CD8-positive, alpha-beta T cell (primary cell): ENCODE measurements at regions of chr15 and their contacts with region 1.

Region 1: GRCh38 chr15:89740137-89740536 is 10.9 kb downstream of the MESP1 start:
- DNase-seq: peak in 8 of 9 experiments; percentile 27 to 80 (median 58)
- ATAC-seq: peak; percentile 91
- H3K4me3 ChIP-seq: no peak overlapping the region
- H3K4me3 Mint-ChIP-seq: no peak overlapping the region
- H3K27ac ChIP-seq: no peak overlapping the region
- H3K27ac Mint-ChIP-seq: no peak overlapping the region
- H3K4me1 ChIP-seq: no peaks in the 10 kb centered on the region
- H3K4me1 Mint-ChIP-seq: peaks cover 2% of the 10 kb centered on the region
- H3K27me3 ChIP-seq: no peaks in the 10 kb centered on the region
- H3K27me3 Mint-ChIP-seq: peaks cover 6% of the 10 kb centered on the region
- CTCF ChIP-seq: peak; percentile 83

Region 2: DNA sequence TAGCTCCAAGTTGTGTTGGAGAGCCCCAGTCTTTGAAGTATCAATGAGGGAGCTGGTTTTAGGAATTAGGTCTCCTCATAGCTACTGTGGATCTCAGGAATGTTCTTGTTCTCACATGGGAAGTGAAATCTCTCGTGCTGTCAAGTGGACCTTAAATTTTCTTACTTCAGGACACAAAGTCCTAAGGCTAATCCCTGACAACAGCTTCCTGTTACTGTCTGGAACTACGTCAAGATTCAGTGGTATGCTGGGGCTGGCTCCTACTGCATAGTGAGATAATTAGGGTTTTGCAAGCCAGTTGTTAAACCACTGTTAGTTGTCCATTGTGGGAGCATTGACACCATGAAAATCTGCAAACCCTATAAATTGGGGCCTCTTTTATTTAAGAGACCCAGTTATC is 11.9 kb before region 1 on chr15:
- CTCF ChIA-PET with region 1: interaction called, 13 read pairs
- POLR2A ChIA-PET with region 1: no interaction called
- intact Hi-C with region 1: no loop called
- DNase-seq: no peak
- ATAC-seq: no peak
- H3K4me3 ChIP-seq: no peak overlapping the region
- H3K4me3 Mint-ChIP-seq: no peak overlapping the region
- H3K27ac ChIP-seq: no peak overlapping the region
- H3K27ac Mint-ChIP-seq: no peak overlapping the region
- H3K4me1 ChIP-seq: no peaks in the 10 kb centered on the region
- H3K4me1 Mint-ChIP-seq: no peaks in the 10 kb centered on the region
- H3K27me3 ChIP-seq: no peaks in the 10 kb centered on the region
- H3K27me3 Mint-ChIP-seq: peaks cover 12% of the 10 kb centered on the region
- CTCF ChIP-seq: no peak

Region 3: GRCh38 chr15:89874926-89875564 is 134.9 kb after region 1 on chr15:
- CTCF ChIA-PET with region 1: interaction called, 22 read pairs
- POLR2A ChIA-PET with region 1: interaction called, 4 read pairs
- intact Hi-C with region 1: loop called in 1 of 2 experiments (anchors 1 kb)
- DNase-seq: peak; percentile 60 to 88 (median 82)
- ATAC-seq: peak; percentile 100
- H3K4me3 ChIP-seq: no peak overlapping the region
- H3K4me3 Mint-ChIP-seq: no peak overlapping the region
- H3K27ac ChIP-seq: no peak overlapping the region
- H3K27ac Mint-ChIP-seq: no peak overlapping the region
- H3K4me1 ChIP-seq: no peaks in the 10 kb centered on the region
- H3K4me1 Mint-ChIP-seq: peaks cover 8% of the 10 kb centered on the region
- H3K27me3 ChIP-seq: no peaks in the 10 kb centered on the region
- H3K27me3 Mint-ChIP-seq: no peaks in the 10 kb centered on the region
- CTCF ChIP-seq: peak; percentile 98

Region 4: DNA sequence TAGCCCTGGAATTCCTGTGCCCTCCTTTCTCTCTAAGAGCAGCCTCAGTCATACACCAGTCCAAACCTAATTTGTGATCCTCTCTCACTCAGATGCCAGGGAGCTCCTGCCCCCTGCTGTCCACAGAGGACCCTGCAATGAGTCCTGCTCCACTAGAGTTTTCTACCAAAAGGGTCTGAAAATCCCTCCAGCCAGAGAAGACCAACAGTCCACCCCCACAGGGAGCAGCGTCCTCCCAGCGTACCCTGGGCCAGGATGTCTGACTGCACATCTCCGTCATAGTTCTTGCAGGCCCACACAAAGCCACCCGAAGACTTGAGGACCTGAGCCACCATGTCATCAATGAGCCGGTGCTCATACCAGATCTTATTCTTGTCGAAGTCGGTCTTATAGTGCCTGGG is 346.7 kb after region 1 on chr15:
- CTCF ChIA-PET with region 1: interaction called, 3 read pairs
- POLR2A ChIA-PET with region 1: no interaction called
- intact Hi-C with region 1: loop called (anchors 1 to 2 kb)
- DNase-seq: peak in 8 of 9 experiments; percentile 27 to 64 (median 48)
- ATAC-seq: peak; percentile 91
- H3K4me3 ChIP-seq: no peak overlapping the region
- H3K4me3 Mint-ChIP-seq: no peak overlapping the region
- H3K27ac ChIP-seq: no peak overlapping the region
- H3K27ac Mint-ChIP-seq: peak overlapping the region; percentile 70
- H3K4me1 ChIP-seq: no peaks in the 10 kb centered on the region
- H3K4me1 Mint-ChIP-seq: peaks cover 4% of the 10 kb centered on the region
- H3K27me3 ChIP-seq: no peaks in the 10 kb centered on the region
- H3K27me3 Mint-ChIP-seq: no peaks in the 10 kb centered on the region
- CTCF ChIP-seq: peak; percentile 59

Region 5: GRCh38 chr15:90286678-90287077 is 546.5 kb after region 1 on chr15:
- CTCF ChIA-PET with region 1: no interaction called
- POLR2A ChIA-PET with region 1: no interaction called
- intact Hi-C with region 1: loop called in 1 of 2 experiments (anchors 2 kb)
- DNase-seq: peak in 6 of 9 experiments; percentile 24 to 77 (median 55)
- ATAC-seq: peak; percentile 94
- H3K4me3 ChIP-seq: no peak overlapping the region
- H3K4me3 Mint-ChIP-seq: no peak overlapping the region
- H3K27ac ChIP-seq: no peak overlapping the region
- H3K27ac Mint-ChIP-seq: no peak overlapping the region
- H3K4me1 ChIP-seq: no peaks in the 10 kb centered on the region
- H3K4me1 Mint-ChIP-seq: no peaks in the 10 kb centered on the region
- H3K27me3 ChIP-seq: no peaks in the 10 kb centered on the region
- H3K27me3 Mint-ChIP-seq: no peaks in the 10 kb centered on the region
- CTCF ChIP-seq: peak; percentile 78